ENCODE measurements at regions of chr5 and their contacts with region 1.

Region 1: GRCh38 chr5:90264689-90265544 is 144.6 kb downstream of the CETN3 start:
- DNase-seq: peak; percentile 73
- H3K4me3 Mint-ChIP-seq: no peak overlapping the region
- H3K27ac Mint-ChIP-seq: no peak overlapping the region
- H3K4me1 Mint-ChIP-seq: peaks cover 2% of the 10 kb centered on the region
- H3K27me3 Mint-ChIP-seq: peaks cover 7% of the 10 kb centered on the region

Region 2: GRCh38 chr5:90135779-90136378 is 129.0 kb before region 1 on chr5:
- CTCF ChIA-PET with region 1: no interaction called
- intact Hi-C with region 1: loop called (anchors 5 kb)
- DNase-seq: no peak
- H3K4me3 Mint-ChIP-seq: no peak overlapping the region
- H3K27ac Mint-ChIP-seq: no peak overlapping the region
- H3K4me1 Mint-ChIP-seq: no peaks in the 10 kb centered on the region
- H3K27me3 Mint-ChIP-seq: no peaks in the 10 kb centered on the region

Region 3: DNA sequence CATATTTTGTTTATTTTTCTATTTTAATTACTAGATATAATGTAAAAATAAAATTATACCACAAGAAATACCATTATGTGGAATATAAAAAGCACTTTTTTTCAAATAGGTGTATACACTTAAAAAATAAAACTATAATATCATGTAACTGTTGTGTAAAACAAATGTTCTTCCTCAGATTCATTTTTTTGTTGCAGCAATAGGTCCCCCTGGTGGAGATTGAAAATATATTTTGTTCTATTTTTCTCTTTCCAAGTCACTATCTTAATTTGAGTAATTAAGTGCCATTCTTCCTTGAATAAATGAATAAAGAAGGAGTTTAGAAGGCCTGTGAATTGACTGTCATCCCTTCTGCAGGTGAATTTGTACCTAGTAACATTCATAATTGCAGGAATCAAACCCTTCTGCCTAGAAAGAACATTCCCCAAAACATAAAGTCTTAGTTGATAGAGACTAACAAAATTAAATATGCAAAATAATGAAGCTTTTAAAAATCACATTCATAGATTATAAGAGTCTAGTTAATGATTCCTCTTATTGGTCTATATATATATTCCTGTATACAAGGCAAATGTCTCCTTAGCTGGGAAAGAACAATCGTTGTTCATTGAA is 121.3 kb after region 1 on chr5:
- CTCF ChIA-PET with region 1: no interaction called
- intact Hi-C with region 1: loop called (anchors 10 kb)
- DNase-seq: no peak
- H3K4me3 Mint-ChIP-seq: no peak overlapping the region
- H3K27ac Mint-ChIP-seq: no peak overlapping the region
- H3K4me1 Mint-ChIP-seq: peaks cover 5% of the 10 kb centered on the region
- H3K27me3 Mint-ChIP-seq: peaks cover 4% of the 10 kb centered on the region

Region 4: DNA sequence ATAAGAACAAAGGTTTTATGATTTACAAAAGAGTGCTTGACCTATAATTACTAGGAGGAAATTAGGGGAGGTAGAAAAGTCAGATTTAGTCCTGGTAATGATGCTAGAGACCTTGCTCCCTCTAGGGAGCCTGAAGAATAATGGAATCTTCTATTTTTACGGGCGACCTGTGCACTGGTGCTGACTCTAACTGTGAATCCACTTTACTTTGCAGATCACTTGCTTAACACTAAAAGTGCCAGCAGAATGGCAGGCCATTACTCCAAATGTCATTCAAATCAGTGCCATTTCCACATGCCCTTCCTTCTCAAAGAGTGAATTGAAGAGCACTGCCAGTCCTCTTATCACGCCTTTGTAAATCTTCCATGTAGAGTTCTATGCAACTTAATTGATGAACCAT is 1477.6 kb after region 1 on chr5:
- CTCF ChIA-PET with region 1: no interaction called
- intact Hi-C with region 1: no loop called
- DNase-seq: no peak
- H3K4me3 Mint-ChIP-seq: no peak overlapping the region
- H3K27ac Mint-ChIP-seq: no peak overlapping the region
- H3K4me1 Mint-ChIP-seq: no peaks in the 10 kb centered on the region
- H3K27me3 Mint-ChIP-seq: no peaks in the 10 kb centered on the region